H1 (cell line): ENCODE measurements at regions of chr10 and their contacts with region 1.

Region 1: GRCh38 chr10:122980209-122981065 is at the start of gene PSTK:
- DNase-seq: peak; percentile 69 to 94
- H3K4me3 ChIP-seq: peak within 1 kb of the TSS; percentile 56 to 92 (median 78)
- H3K27ac ChIP-seq: peak within 1 kb of the TSS; percentile 100
- H3K4me1 ChIP-seq: peaks cover 0 to 3% (median 0%) of the 10 kb centered on the region in 4 experiments; a peak in 2 of 7 replicates
- H3K27me3 ChIP-seq: no peaks in the 10 kb centered on the region
- CTCF ChIP-seq: peak; percentile 78 to 95 (median 91)
- EP300 ChIP-seq: peak in 1 of 2 experiments; percentile 44; a peak in 1 of 3 replicates
- POLR2A ChIP-seq: peak; percentile 92 to 97
- RAD21 ChIP-seq: peak; percentile 46 to 61
- total RNA-seq, gene PSTK: 4.3 and 6.6 TPM in 2 replicates

Region 2: GRCh38 chr10:122939856-122940543 is 40.4 kb before region 1 on chr10:
- CTCF ChIA-PET with region 1: no interaction called
- POLR2A ChIA-PET with region 1: no interaction called
- DNase-seq: no peak
- H3K4me3 ChIP-seq: no peak overlapping the region
- H3K27ac ChIP-seq: no peak overlapping the region
- H3K4me1 ChIP-seq: no peaks in the 10 kb centered on the region
- H3K27me3 ChIP-seq: no peaks in the 10 kb centered on the region
- CTCF ChIP-seq: no peak
- EP300 ChIP-seq: no peak
- POLR2A ChIP-seq: no peak
- RAD21 ChIP-seq: no peak

Region 3: GRCh38 chr10:122999347-122999746 is 18.9 kb after region 1 on chr10:
- CTCF ChIA-PET with region 1: interaction called, 24 read pairs
- POLR2A ChIA-PET with region 1: interaction called, 12 read pairs
- DNase-seq: no peak
- H3K4me3 ChIP-seq: no peak overlapping the region
- H3K27ac ChIP-seq: no peak overlapping the region
- H3K4me1 ChIP-seq: no peaks in the 10 kb centered on the region
- H3K27me3 ChIP-seq: no peaks in the 10 kb centered on the region
- CTCF ChIP-seq: no peak
- EP300 ChIP-seq: no peak
- POLR2A ChIP-seq: no peak
- RAD21 ChIP-seq: no peak